Psoas muscle (tissue), 8 donors: ENCODE measurements at regions of chr4 and their contacts with region 1.

Region 1: DNA sequence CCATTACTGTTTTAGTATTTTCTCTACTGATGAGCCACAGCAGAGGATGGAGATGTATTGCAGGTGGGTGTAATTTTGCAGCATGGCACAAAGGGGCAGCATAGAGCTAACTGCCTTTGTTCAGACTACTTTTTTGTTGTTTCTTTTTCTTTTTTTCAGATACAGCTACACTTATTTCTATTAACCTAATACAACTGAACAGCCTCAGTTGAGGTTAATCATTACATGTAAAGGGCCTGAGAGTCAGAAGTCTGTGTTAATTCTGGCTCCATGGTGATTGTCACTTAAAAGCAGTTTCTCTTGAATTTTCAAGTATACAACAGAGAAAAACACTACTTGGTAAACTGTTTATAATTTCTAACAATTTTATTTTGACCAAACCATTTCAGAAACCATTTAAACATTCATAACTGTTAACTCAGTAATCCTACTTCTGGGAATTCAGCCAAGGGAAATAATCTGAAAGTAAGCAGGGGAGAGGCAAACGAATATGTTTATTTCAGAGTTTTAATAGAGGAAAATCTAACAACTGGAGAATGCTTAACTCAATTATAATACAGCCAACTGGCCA is 13.9 kb upstream of the PPEF2 start:
- DNase-seq: no peak
- ATAC-seq: peak in 2 of 4 donors; percentile 46 to 73
- H3K4me3 ChIP-seq: no peak overlapping the region
- H3K27ac ChIP-seq: no peak overlapping the region
- H3K4me1 ChIP-seq: no peaks in the 10 kb centered on the region
- H3K27me3 ChIP-seq: no peaks in the 10 kb centered on the region
- CTCF ChIP-seq: peak; percentile 74

Region 2: GRCh38 chr4:76067652-76068286 is 151.6 kb after region 1 on chr4:
- intact Hi-C with region 1: loop called in 1 of 2 experiments (anchors 10 kb)
- DNase-seq: peak; percentile 53 to 74
- ATAC-seq: peak; percentile 76 to 95 (median 88)
- H3K4me3 ChIP-seq: no peak overlapping the region
- H3K27ac ChIP-seq: no peak overlapping the region
- H3K4me1 ChIP-seq: peaks cover 7% of the 10 kb centered on the region
- H3K27me3 ChIP-seq: no peaks in the 10 kb centered on the region
- CTCF ChIP-seq: peak; percentile 92

Region 3: DNA sequence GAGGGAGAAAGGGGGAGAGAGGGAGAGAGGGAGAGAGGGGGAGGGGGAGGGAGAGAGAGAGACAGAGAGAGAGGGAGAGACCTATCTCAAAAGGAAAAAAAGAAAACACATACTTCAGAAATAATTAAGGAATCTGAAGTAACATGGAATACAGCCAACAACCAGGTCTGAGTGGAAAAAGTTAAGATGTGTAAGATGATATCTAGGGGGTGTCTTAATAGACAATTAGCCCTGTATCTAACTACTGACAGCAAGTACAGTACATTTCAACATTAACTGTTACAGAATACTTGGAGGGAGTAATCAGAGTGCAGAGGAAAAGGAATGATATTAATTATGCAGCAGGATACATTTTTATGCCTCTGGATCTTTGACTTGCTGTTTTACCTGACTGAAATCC is 209.6 kb after region 1 on chr4:
- intact Hi-C with region 1: no loop called
- DNase-seq: no peak
- ATAC-seq: no peak
- H3K4me3 ChIP-seq: no peak overlapping the region
- H3K27ac ChIP-seq: no peak overlapping the region
- H3K4me1 ChIP-seq: no peaks in the 10 kb centered on the region
- H3K27me3 ChIP-seq: no peaks in the 10 kb centered on the region
- CTCF ChIP-seq: no peak